Caco-2 (cell line): ENCODE measurements at regions of chr7 and their contacts with region 1.

Region 1: DNA sequence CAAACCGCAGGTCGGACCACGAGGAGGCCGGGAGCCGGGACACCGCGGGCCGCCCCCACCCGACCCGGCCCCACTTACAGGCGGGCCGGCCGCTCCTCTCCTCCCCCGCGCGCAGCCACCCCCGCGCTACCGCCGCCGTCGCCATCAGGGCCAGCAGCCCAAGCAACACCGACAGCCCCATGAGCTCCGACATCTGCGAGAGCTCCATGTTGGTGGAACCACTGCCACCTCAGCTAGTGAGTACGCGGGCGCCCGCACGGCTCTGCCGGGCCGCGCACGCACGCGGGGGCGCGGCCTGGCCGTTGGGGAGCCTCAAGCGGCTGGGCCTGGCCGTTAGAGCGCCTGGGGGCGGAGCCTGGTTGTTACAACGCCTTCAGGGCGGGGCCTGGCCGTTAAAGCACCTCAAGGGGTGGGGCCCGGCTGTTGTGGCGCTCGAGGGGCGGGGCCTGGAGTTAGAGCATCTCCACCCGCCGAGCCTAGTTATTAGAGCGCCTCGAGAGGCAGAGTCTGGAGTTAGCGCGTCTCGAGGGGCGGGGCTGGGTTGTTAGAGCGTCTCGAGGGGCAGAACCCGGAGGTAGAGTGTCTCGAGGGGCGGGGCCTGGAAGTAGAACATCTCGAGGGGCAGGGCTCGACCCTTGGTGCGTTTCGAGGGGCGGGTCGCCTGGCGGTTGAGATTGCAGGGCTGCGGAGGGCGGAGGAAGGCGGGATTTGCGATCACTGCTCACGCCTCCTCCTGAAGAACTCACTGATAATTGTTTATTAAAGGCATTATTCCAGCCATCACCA is at the start of gene TBL2:
- DNase-seq: peak; percentile 99
- H3K4me3 ChIP-seq: peak within 1 kb of the TSS; percentile 60
- H3K4me3 Mint-ChIP-seq: peak within 1 kb of the TSS; percentile 95
- H3K27ac Mint-ChIP-seq: peak within 1 kb of the TSS; percentile 92
- H3K4me1 ChIP-seq: peaks cover 8% of the 10 kb centered on the region; the same call in 1 of the 2 replicates
- H3K4me1 Mint-ChIP-seq: peaks cover 8% of the 10 kb centered on the region
- H3K27me3 ChIP-seq: no peaks in the 10 kb centered on the region
- H3K27me3 Mint-ChIP-seq: no peaks in the 10 kb centered on the region
- CTCF ChIP-seq: peak in 1 of 2 experiments; percentile 30
- total RNA-seq, gene TBL2: 74.8 and 76.8 TPM in 2 replicates

Region 2: DNA sequence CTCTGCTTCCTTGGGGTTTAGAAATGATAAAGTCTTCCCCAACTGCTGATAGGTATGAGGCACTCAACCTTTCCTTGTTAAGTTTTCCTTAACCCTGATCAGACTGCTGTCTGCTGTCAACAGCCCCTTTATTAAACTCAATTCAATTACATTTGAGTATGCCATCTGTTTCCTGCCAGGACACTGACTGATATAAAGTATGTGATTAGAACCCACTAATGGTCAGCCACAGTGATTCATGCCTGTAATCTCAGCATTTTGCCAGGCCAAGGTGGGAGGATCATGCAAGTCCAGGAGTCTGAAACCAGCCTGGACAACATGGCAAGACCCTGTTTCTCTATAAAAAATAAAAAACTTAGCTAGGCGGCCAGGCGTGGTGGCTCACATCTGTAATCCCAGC is 74.5 kb before region 1 on chr7:
- CTCF ChIA-PET with region 1: no interaction called
- POLR2A ChIA-PET with region 1: no interaction called
- intact Hi-C with region 1: no loop called
- DNase-seq: no peak
- H3K4me3 ChIP-seq: no peak overlapping the region
- H3K4me3 Mint-ChIP-seq: no peak overlapping the region
- H3K27ac Mint-ChIP-seq: no peak overlapping the region
- H3K4me1 ChIP-seq: no peaks in the 10 kb centered on the region
- H3K4me1 Mint-ChIP-seq: no peaks in the 10 kb centered on the region
- H3K27me3 ChIP-seq: no peaks in the 10 kb centered on the region
- H3K27me3 Mint-ChIP-seq: no peaks in the 10 kb centered on the region
- CTCF ChIP-seq: no peak

Region 3: DNA sequence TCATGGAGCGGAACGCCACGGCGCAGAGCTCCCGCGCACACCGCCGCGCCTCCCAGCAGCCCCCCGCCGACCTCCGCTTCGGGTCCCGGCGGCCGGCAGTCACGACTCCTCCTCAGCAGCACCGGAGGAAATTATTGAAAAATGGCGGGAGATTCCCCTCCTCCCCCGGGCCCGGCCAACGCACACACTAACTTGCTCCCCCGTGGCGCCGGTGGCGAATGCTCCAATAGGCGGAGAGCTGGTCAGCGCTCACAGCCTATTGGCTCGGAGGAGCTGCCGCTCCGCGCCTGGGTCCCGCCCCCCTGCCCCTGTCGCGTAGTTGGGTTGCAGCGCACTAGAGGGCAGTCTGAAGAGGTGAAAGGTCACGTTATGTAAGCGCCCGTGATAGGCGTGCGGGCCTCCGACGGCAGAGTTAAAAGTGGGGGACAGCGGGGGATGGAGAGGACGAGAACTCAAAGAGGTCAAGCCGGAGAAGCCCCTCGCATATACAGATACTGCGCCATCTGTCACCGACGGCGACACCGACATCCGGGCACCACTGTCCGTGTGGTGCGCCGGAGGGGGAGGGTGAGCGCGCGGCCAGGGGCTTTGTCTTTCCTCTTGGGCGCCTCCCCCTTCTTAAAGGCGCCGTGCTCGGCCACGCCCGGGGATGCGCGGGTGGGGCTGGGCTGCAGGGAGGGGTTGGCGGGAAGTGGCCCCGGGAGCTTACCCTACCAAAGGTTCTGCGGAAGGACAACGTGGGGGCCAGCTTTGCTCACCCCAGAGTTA is 56.2 kb before region 1 on chr7 and contains the start of gene BAZ1B:
- CTCF ChIA-PET with region 1: no interaction called
- POLR2A ChIA-PET with region 1: interaction called, 14 read pairs
- intact Hi-C with region 1: loop called (anchors 2 kb)
- DNase-seq: peak; percentile 99
- H3K4me3 ChIP-seq: peak within 1 kb of the TSS; percentile 77
- H3K4me3 Mint-ChIP-seq: peak within 1 kb of the TSS; percentile 93
- H3K27ac Mint-ChIP-seq: peak within 1 kb of the TSS; percentile 98
- H3K4me1 ChIP-seq: peaks cover 18% of the 10 kb centered on the region
- H3K4me1 Mint-ChIP-seq: peaks cover 18% of the 10 kb centered on the region
- H3K27me3 ChIP-seq: no peaks in the 10 kb centered on the region
- H3K27me3 Mint-ChIP-seq: no peaks in the 10 kb centered on the region
- CTCF ChIP-seq: peak in 1 of 2 experiments; percentile 21
- total RNA-seq, gene BAZ1B: 85.2 and 85.7 TPM in 2 replicates

Region 4: DNA sequence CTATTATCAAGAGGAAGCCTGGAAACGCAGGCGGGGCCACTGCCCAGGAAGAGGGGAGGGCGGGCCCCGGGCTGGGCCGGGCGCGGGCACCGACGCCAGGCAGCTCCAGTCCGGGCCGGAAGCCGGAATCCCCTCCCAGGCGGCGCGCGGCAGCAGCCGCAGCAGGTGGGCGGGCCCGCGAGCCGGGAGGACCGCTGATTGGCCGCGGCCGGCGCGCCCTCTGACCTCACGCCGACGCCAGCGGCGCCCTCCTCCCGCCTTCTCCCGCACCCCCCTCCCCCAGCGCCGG is 21.5 kb before region 1 on chr7:
- CTCF ChIA-PET with region 1: no interaction called
- POLR2A ChIA-PET with region 1: interaction called, 14 read pairs
- intact Hi-C with region 1: loop called (anchors 1 kb)
- DNase-seq: peak; percentile 93 to 97
- H3K4me3 ChIP-seq: peak overlapping the region; percentile 98
- H3K4me3 Mint-ChIP-seq: peak overlapping the region; percentile 96
- H3K27ac Mint-ChIP-seq: peak overlapping the region; percentile 99
- H3K4me1 ChIP-seq: peaks cover 10% of the 10 kb centered on the region; the same call in 1 of the 2 replicates
- H3K4me1 Mint-ChIP-seq: peaks cover 11% of the 10 kb centered on the region
- H3K27me3 ChIP-seq: no peaks in the 10 kb centered on the region
- H3K27me3 Mint-ChIP-seq: no peaks in the 10 kb centered on the region
- CTCF ChIP-seq: no peak

Region 5: GRCh38 chr7:73567846-73568685 is 10.5 kb before region 1 on chr7:
- CTCF ChIA-PET with region 1: interaction called, 4 read pairs
- POLR2A ChIA-PET with region 1: interaction called, 14 read pairs
- intact Hi-C with region 1: no loop called
- DNase-seq: no peak
- H3K4me3 ChIP-seq: no peak overlapping the region
- H3K4me3 Mint-ChIP-seq: no peak overlapping the region
- H3K27ac Mint-ChIP-seq: no peak overlapping the region
- H3K4me1 ChIP-seq: peaks cover 14% of the 10 kb centered on the region
- H3K4me1 Mint-ChIP-seq: peaks cover 7% of the 10 kb centered on the region
- H3K27me3 ChIP-seq: no peaks in the 10 kb centered on the region
- H3K27me3 Mint-ChIP-seq: no peaks in the 10 kb centered on the region
- CTCF ChIP-seq: no peak

Region 6: GRCh38 chr7:73593207-73594045 is 14.9 kb after region 1 on chr7:
- CTCF ChIA-PET with region 1: no interaction called
- POLR2A ChIA-PET with region 1: no interaction called
- intact Hi-C with region 1: no loop called
- DNase-seq: no peak
- H3K4me3 ChIP-seq: no peak overlapping the region
- H3K4me3 Mint-ChIP-seq: no peak overlapping the region
- H3K27ac Mint-ChIP-seq: no peak overlapping the region
- H3K4me1 ChIP-seq: no peaks in the 10 kb centered on the region
- H3K4me1 Mint-ChIP-seq: no peaks in the 10 kb centered on the region
- H3K27me3 ChIP-seq: no peaks in the 10 kb centered on the region
- H3K27me3 Mint-ChIP-seq: peaks cover 9% of the 10 kb centered on the region
- CTCF ChIP-seq: no peak

Region 7: GRCh38 chr7:73623798-73624668 is 45.5 kb after region 1 on chr7 and contains the start of gene MLXIPL:
- CTCF ChIA-PET with region 1: no interaction called
- POLR2A ChIA-PET with region 1: interaction called, 8 read pairs
- intact Hi-C with region 1: loop called (anchors 1 kb)
- DNase-seq: peak; percentile 93 to 94
- H3K4me3 ChIP-seq: peak within 1 kb of the TSS; percentile 98
- H3K4me3 Mint-ChIP-seq: peak within 1 kb of the TSS; percentile 88
- H3K27ac Mint-ChIP-seq: no peak within 1 kb of the TSS
- H3K4me1 ChIP-seq: peaks cover 18% of the 10 kb centered on the region
- H3K4me1 Mint-ChIP-seq: peaks cover 8% of the 10 kb centered on the region
- H3K27me3 ChIP-seq: no peaks in the 10 kb centered on the region
- H3K27me3 Mint-ChIP-seq: peaks cover 3% of the 10 kb centered on the region
- CTCF ChIP-seq: no peak
- total RNA-seq, gene MLXIPL: 15.6 and 19.8 TPM in 2 replicates